B cell (primary cell): ENCODE measurements at regions of chr5 and their contacts with region 1.

Region 1: GRCh38 chr5:97162045-97162444 is 19.6 kb upstream of the LIX1 start:
- DNase-seq: peak; percentile 76
- ATAC-seq: peak; percentile 39
- H3K4me3 ChIP-seq: no peak overlapping the region
- H3K4me3 Mint-ChIP-seq: no peak overlapping the region
- H3K27ac ChIP-seq: no peak overlapping the region
- H3K27ac Mint-ChIP-seq: no peak overlapping the region
- H3K4me1 ChIP-seq: peaks cover under 1 to 2% of the 10 kb centered on the region in 2 donors
- H3K4me1 Mint-ChIP-seq: no peaks in the 10 kb centered on the region
- H3K27me3 ChIP-seq: no peaks in the 10 kb centered on the region
- H3K27me3 Mint-ChIP-seq: no peaks in the 10 kb centered on the region
- CTCF ChIP-seq: peak; percentile 96

Region 2: GRCh38 chr5:96614110-96614691 is 547.8 kb before region 1 on chr5:
- CTCF ChIA-PET with region 1: interaction called, 24 read pairs
- POLR2A ChIA-PET with region 1: no interaction called
- intact Hi-C with region 1: loop called (anchors 2 kb)
- DNase-seq: peak; percentile 56
- ATAC-seq: no peak
- H3K4me3 ChIP-seq: no peak overlapping the region
- H3K4me3 Mint-ChIP-seq: no peak overlapping the region
- H3K27ac ChIP-seq: no peak overlapping the region
- H3K27ac Mint-ChIP-seq: no peak overlapping the region
- H3K4me1 ChIP-seq: peaks cover 0 to 3% of the 10 kb centered on the region in 2 donors
- H3K4me1 Mint-ChIP-seq: no peaks in the 10 kb centered on the region
- H3K27me3 ChIP-seq: peaks cover 0 to 6% (median 0%) of the 10 kb centered on the region in 4 experiments
- H3K27me3 Mint-ChIP-seq: peaks cover 18% of the 10 kb centered on the region
- CTCF ChIP-seq: peak; percentile 75

Region 3: GRCh38 chr5:96807075-96807654 is 354.9 kb before region 1 on chr5:
- CTCF ChIA-PET with region 1: interaction called, 33 read pairs
- POLR2A ChIA-PET with region 1: no interaction called
- intact Hi-C with region 1: loop called (anchors 1 kb)
- DNase-seq: no peak
- ATAC-seq: peak; percentile 19
- H3K4me3 ChIP-seq: peak overlapping the region; percentile 47 to 86 (median 73)
- H3K4me3 Mint-ChIP-seq: peak overlapping the region; percentile 90
- H3K27ac ChIP-seq: peak overlapping the region; percentile 86 to 90
- H3K27ac Mint-ChIP-seq: peak overlapping the region; percentile 99
- H3K4me1 ChIP-seq: peaks cover 25 to 32% of the 10 kb centered on the region in 2 donors
- H3K4me1 Mint-ChIP-seq: peaks cover 49% of the 10 kb centered on the region
- H3K27me3 ChIP-seq: no peaks in the 10 kb centered on the region
- H3K27me3 Mint-ChIP-seq: no peaks in the 10 kb centered on the region
- CTCF ChIP-seq: no peak

Region 4: GRCh38 chr5:96896806-96897205 is 265.2 kb before region 1 on chr5:
- CTCF ChIA-PET with region 1: interaction called, 11 read pairs
- POLR2A ChIA-PET with region 1: no interaction called
- intact Hi-C with region 1: no loop called
- DNase-seq: peak; percentile 86
- ATAC-seq: peak; percentile 97
- H3K4me3 ChIP-seq: peak overlapping the region; percentile 24 to 65 (median 45)
- H3K4me3 Mint-ChIP-seq: peak overlapping the region; percentile 80
- H3K27ac ChIP-seq: peak overlapping the region; percentile 96 to 98
- H3K27ac Mint-ChIP-seq: peak overlapping the region; percentile 85
- H3K4me1 ChIP-seq: peaks cover 16 to 18% of the 10 kb centered on the region in 2 donors
- H3K4me1 Mint-ChIP-seq: peaks cover 32% of the 10 kb centered on the region
- H3K27me3 ChIP-seq: no peaks in the 10 kb centered on the region
- H3K27me3 Mint-ChIP-seq: no peaks in the 10 kb centered on the region
- CTCF ChIP-seq: no peak

Region 5: DNA sequence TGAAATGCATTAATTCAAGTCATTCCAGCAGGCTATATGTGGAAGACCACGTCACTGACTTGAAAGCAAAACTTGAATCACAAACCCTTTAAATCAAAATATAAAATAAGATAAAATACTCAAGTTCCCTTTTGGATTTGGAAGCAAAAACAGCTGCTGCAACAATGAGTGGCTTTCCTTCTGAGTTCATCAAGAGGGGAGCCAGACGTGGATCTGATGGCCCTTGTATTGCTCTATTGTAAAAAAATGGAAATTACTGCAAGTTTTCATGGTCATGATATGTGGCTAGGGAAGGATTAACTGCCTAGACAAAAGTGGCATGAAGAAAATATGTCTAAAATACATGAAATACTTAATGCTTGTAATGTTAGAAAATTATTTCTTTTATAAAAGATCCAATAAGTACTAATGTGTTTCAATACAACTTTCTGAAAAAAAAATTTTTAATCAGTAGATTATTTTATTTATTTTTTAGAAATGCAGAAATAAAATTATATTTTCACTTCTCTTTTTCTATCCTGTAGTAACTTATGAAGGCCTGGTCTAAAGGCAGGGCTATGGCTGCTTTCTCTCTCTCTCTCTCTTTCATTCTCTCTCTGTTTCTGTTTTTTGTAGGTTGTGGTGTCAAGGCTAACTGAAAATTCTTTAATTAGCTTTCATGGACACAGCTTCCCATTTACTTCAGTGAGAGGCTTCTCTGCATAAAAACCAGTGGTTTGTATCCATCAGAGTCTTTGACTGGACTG is 43.6 kb before region 1 on chr5:
- CTCF ChIA-PET with region 1: no interaction called
- POLR2A ChIA-PET with region 1: no interaction called
- intact Hi-C with region 1: no loop called
- DNase-seq: peak; percentile 13
- ATAC-seq: no peak
- H3K4me3 ChIP-seq: no peak overlapping the region
- H3K4me3 Mint-ChIP-seq: no peak overlapping the region
- H3K27ac ChIP-seq: peak overlapping the region in 1 of 2 donors; percentile 65
- H3K27ac Mint-ChIP-seq: peak overlapping the region; percentile 2
- H3K4me1 ChIP-seq: peaks cover 9 to 11% of the 10 kb centered on the region in 2 donors
- H3K4me1 Mint-ChIP-seq: peaks cover 9% of the 10 kb centered on the region
- H3K27me3 ChIP-seq: no peaks in the 10 kb centered on the region
- H3K27me3 Mint-ChIP-seq: peaks cover 4% of the 10 kb centered on the region
- CTCF ChIP-seq: no peak

Region 6: DNA sequence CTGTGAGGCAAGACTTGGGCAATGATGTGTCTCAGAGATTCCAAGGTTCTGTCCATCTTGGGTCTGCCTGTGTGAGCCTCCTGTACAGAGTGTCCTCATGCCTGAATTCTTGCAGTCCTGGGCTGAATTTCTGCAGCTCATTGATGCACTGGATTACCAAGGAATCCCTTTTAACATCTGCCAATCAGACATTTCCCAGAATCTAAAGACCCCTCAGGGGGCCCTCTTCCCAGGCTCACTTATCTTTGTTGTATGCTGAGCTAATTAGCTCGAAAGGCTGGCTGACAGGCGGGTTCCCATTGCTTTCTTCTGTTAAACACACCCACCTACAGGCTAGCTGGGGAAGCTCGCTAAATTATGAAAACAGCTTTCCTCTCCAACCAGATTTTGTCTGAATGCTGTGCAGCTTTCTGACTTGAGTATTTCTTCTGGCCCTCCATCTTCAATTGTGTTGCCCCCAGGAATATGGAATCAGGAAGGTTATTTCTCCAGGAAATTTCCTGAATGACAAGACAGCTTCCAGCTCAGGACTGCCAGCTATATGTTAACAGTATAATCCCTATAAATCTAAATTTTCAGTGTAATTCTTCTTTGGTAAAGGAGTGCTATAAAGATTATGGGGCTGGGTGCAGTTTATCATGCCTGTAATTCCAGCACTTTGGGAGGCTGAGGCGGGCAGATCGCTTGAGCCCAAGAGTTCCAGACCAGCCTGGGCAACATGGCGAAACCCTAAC is 19.4 kb before region 1 on chr5 and contains the start of gene LIX1:
- CTCF ChIA-PET with region 1: interaction called, 18 read pairs
- POLR2A ChIA-PET with region 1: no interaction called
- intact Hi-C with region 1: no loop called
- DNase-seq: peak; percentile 34
- ATAC-seq: no peak
- H3K4me3 ChIP-seq: no peak within 1 kb of the TSS
- H3K4me3 Mint-ChIP-seq: no peak within 1 kb of the TSS
- H3K27ac ChIP-seq: no peak within 1 kb of the TSS
- H3K27ac Mint-ChIP-seq: no peak within 1 kb of the TSS
- H3K4me1 ChIP-seq: no peaks in the 10 kb centered on the region
- H3K4me1 Mint-ChIP-seq: no peaks in the 10 kb centered on the region
- H3K27me3 ChIP-seq: no peaks in the 10 kb centered on the region
- H3K27me3 Mint-ChIP-seq: no peaks in the 10 kb centered on the region
- CTCF ChIP-seq: peak; percentile 35
- total RNA-seq, gene LIX1: not detected in 2 replicates

Region 7: DNA sequence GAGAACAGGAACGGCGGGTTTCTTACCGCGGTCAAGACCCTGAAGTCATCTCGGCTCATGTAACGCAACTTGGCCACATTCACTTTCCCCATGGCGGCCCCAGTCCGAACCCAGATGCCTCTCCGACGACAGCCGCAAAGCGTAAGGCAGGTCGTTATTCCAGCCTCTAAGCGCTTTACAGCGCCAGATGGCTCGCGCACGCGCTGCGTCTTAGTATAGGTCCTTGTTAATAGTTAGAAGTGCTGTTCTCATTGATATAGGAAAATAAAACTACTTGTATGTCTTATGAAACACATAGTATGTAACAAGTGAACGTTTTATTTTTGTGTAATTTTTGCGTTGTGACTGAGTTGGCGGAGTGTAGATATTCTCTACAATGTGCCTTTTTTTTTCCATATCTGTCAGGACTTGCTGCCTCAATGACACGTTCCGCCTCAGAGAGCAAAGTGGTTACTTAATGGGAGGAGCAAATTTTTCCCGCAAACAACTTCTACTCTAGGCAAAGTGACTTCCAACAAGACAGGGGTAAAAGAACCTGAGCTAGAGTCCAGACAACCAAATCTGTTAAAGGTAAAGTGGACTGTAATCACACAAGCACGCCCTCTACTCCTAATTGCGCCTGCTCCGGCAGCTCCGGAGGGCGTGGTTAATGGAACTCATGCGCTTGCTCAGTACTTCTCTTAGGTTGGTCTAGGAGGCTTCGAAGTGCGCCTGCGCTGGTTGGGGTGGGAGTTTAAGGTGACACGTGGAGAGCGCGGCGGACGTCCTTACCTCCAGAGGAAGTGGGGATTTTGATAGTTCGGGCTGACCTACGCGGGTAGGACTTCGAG is 21.3 kb after region 1 on chr5 and contains the start of gene RIOK2:
- CTCF ChIA-PET with region 1: interaction called, 8 read pairs
- POLR2A ChIA-PET with region 1: no interaction called
- intact Hi-C with region 1: loop called (anchors 2 kb)
- DNase-seq: peak; percentile 93
- ATAC-seq: peak; percentile 87
- H3K4me3 ChIP-seq: peak within 1 kb of the TSS; percentile 68 to 96 (median 88)
- H3K4me3 Mint-ChIP-seq: peak within 1 kb of the TSS; percentile 97
- H3K27ac ChIP-seq: peak within 1 kb of the TSS; percentile 91 to 99
- H3K27ac Mint-ChIP-seq: peak within 1 kb of the TSS; percentile 100
- H3K4me1 ChIP-seq: peaks cover 12 to 15% of the 10 kb centered on the region in 2 donors
- H3K4me1 Mint-ChIP-seq: peaks cover 33% of the 10 kb centered on the region
- H3K27me3 ChIP-seq: no peaks in the 10 kb centered on the region
- H3K27me3 Mint-ChIP-seq: no peaks in the 10 kb centered on the region
- CTCF ChIP-seq: no peak
- total RNA-seq, gene RIOK2: 32.8 and 37.2 TPM in 2 replicates

Region 8: GRCh38 chr5:97547999-97548738 is 386.1 kb after region 1 on chr5:
- CTCF ChIA-PET with region 1: no interaction called
- POLR2A ChIA-PET with region 1: no interaction called
- intact Hi-C with region 1: no loop called
- DNase-seq: no peak
- ATAC-seq: no peak
- H3K4me3 ChIP-seq: no peak overlapping the region
- H3K4me3 Mint-ChIP-seq: no peak overlapping the region
- H3K27ac ChIP-seq: no peak overlapping the region
- H3K27ac Mint-ChIP-seq: no peak overlapping the region
- H3K4me1 ChIP-seq: peaks cover 6 to 8% of the 10 kb centered on the region in 2 donors
- H3K4me1 Mint-ChIP-seq: peaks cover 8% of the 10 kb centered on the region
- H3K27me3 ChIP-seq: no peaks in the 10 kb centered on the region
- H3K27me3 Mint-ChIP-seq: no peaks in the 10 kb centered on the region
- CTCF ChIP-seq: no peak